Esophagus squamous epithelium (tissue), 5 donors: ENCODE measurements at regions of chr20 and their contacts with region 1.

Region 1: GRCh38 chr20:19784511-19785172 is 26.6 kb downstream of the RIN2 start:
- DNase-seq: no peak
- H3K4me3 ChIP-seq: no peak overlapping the region
- H3K27ac ChIP-seq: peak overlapping the region in 3 of 4 donors; percentile 63
- H3K4me1 ChIP-seq: peaks cover 22 to 44% (median 34%) of the 10 kb centered on the region in 3 donors
- H3K27me3 ChIP-seq: no peaks in the 10 kb centered on the region
- CTCF ChIP-seq: peak; percentile 61 to 88 (median 78)
- POLR2A ChIP-seq: no peak

Region 2: GRCh38 chr20:19603376-19603750 is 181.3 kb before region 1 on chr20:
- intact Hi-C with region 1: no loop called
- DNase-seq: no peak
- H3K4me3 ChIP-seq: no peak overlapping the region
- H3K27ac ChIP-seq: no peak overlapping the region
- H3K4me1 ChIP-seq: peaks cover 0 to 5% (median 0%) of the 10 kb centered on the region in 3 donors
- H3K27me3 ChIP-seq: no peaks in the 10 kb centered on the region
- CTCF ChIP-seq: no peak
- POLR2A ChIP-seq: no peak

Region 3: GRCh38 chr20:19692685-19693119 is 91.9 kb before region 1 on chr20:
- intact Hi-C with region 1: loop called (anchors 10 kb)
- DNase-seq: no peak
- H3K4me3 ChIP-seq: peak overlapping the region in 1 of 4 donors; percentile 22
- H3K27ac ChIP-seq: peak overlapping the region in 1 of 4 donors; percentile 4
- H3K4me1 ChIP-seq: peaks cover 0 to 21% (median 0%) of the 10 kb centered on the region in 3 donors
- H3K27me3 ChIP-seq: no peaks in the 10 kb centered on the region
- CTCF ChIP-seq: peak; percentile 80 to 97 (median 92)
- POLR2A ChIP-seq: no peak

Region 4: GRCh38 chr20:19889011-19889953 is 104.6 kb after region 1 on chr20:
- intact Hi-C with region 1: loop called (anchors 10 kb)
- DNase-seq: no peak
- H3K4me3 ChIP-seq: peak overlapping the region in 3 of 4 donors; percentile 16 to 58 (median 27)
- H3K27ac ChIP-seq: peak overlapping the region; percentile 52 to 94 (median 84)
- H3K4me1 ChIP-seq: peaks cover 36 to 76% (median 53%) of the 10 kb centered on the region in 3 donors
- H3K27me3 ChIP-seq: no peaks in the 10 kb centered on the region
- CTCF ChIP-seq: no peak
- POLR2A ChIP-seq: no peak

Region 5: GRCh38 chr20:19995220-19995863 is 210.7 kb after region 1 on chr20:
- intact Hi-C with region 1: loop called (anchors 10 kb)
- DNase-seq: no peak
- H3K4me3 ChIP-seq: no peak overlapping the region
- H3K27ac ChIP-seq: peak overlapping the region in 2 of 4 donors; percentile 88 to 89
- H3K4me1 ChIP-seq: peaks cover 20 to 93% (median 51%) of the 10 kb centered on the region in 3 donors
- H3K27me3 ChIP-seq: no peaks in the 10 kb centered on the region
- CTCF ChIP-seq: peak; percentile 63 to 84 (median 74)
- POLR2A ChIP-seq: no peak